ENCODE measurements at regions of chr18 and their contacts with region 1.

Region 1: DNA sequence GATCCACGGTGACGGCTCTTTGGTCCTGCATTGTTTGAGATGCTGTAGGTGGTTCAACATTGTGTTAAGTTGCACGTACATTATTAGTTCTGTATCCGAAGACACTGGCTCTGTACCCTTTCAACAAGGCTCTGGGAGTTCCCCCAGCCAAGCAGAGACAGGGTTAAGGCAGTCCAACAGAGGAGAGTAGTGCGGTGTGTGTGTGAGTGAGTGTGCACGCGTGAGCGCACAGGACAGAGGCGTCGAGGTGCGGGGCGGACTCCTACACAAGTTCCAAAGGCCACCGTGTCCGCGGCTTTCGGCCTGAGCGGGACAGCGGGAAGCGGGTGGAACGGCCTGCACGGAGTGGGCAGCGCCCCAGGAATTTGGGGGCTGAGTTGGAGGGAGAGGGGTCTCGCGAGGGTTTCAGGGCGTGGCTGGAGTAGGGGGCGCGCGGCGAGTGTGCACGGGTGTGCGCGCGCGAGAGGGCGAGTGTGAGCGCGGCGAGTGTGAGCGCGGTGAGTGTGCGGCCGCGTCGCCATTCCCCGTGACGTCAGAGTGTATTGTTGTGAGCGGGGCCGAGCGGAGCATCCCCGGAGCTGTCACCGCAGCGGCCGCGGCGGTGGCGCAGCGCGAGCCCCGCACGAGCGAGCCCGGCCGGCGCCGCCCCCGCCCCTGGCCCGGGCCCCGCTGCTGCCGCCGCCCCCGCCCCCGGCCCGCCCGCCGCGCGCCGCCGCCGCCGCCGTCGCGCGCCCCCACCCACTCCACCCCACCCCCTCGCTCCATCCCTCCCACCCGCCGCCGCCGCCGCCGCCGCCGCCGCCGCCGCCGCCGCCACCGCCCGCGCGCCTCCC is at the start of gene ASXL3:
- DNase-seq: peak; percentile 45
- H3K4me3 ChIP-seq: peak within 1 kb of the TSS; percentile 43 to 49 (median 44)
- H3K27ac ChIP-seq: no peak within 1 kb of the TSS
- H3K4me1 ChIP-seq: peaks cover 4% of the 10 kb centered on the region
- H3K27me3 ChIP-seq: peaks cover 22 to 54% of the 10 kb centered on the region in 2 experiments
- CTCF ChIP-seq: no peak
- POLR2A ChIP-seq: no peak
- total RNA-seq, gene ASXL3: 0.27 and 1.7 TPM in 2 replicates

Region 2: DNA sequence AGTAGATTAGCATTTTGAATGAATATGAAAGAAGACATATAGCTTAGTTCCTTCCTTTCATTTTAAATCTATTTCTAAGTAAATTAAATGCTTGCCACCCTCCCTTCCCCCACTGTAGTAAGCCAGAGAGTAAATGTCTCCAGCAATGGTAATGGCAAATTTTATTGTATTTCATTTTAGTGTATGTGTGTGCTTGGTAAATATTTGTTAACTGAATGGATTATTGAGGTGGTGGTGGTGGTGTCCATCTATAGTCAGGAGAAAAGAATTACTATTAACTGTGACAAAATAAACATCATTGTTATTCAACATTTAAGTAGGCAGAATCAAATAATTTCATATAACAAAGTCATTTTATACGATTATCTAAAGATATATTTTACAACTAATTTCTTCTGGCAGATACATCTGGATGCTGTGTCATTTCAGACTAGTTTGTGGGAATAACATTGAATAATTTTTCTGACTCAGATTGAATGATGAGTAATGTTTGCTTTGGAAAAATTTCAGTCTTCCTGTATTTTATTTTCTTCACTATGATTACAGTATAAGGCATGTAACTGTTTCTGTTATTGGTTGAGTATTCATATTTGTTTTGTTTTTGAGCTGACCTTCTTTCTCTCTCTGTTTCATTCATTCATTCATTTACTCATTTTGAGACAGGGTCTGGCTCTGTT is 18.4 kb after region 1 on chr18:
- CTCF ChIA-PET with region 1: interaction called, 5 read pairs
- POLR2A ChIA-PET with region 1: no interaction called
- dilution Hi-C with region 1: no loop called
- intact Hi-C with region 1: loop called (anchors 1 kb)
- DNase-seq: peak; percentile 90
- H3K4me3 ChIP-seq: no peak overlapping the region
- H3K27ac ChIP-seq: peak overlapping the region; percentile 80
- H3K4me1 ChIP-seq: peaks cover 22% of the 10 kb centered on the region
- H3K27me3 ChIP-seq: no peaks in the 10 kb centered on the region
- CTCF ChIP-seq: no peak
- POLR2A ChIP-seq: no peak

Region 3: GRCh38 chr18:33666915-33667314 is 89.0 kb after region 1 on chr18:
- CTCF ChIA-PET with region 1: no interaction called
- POLR2A ChIA-PET with region 1: no interaction called
- dilution Hi-C with region 1: no loop called
- intact Hi-C with region 1: loop called (anchors 5 kb)
- DNase-seq: no peak
- H3K4me3 ChIP-seq: no peak overlapping the region
- H3K27ac ChIP-seq: no peak overlapping the region
- H3K4me1 ChIP-seq: no peaks in the 10 kb centered on the region
- H3K27me3 ChIP-seq: no peaks in the 10 kb centered on the region
- CTCF ChIP-seq: no peak
- POLR2A ChIP-seq: no peak